ENCODE measurements at regions of chr6 and their contacts with region 1.

Region 1: DNA sequence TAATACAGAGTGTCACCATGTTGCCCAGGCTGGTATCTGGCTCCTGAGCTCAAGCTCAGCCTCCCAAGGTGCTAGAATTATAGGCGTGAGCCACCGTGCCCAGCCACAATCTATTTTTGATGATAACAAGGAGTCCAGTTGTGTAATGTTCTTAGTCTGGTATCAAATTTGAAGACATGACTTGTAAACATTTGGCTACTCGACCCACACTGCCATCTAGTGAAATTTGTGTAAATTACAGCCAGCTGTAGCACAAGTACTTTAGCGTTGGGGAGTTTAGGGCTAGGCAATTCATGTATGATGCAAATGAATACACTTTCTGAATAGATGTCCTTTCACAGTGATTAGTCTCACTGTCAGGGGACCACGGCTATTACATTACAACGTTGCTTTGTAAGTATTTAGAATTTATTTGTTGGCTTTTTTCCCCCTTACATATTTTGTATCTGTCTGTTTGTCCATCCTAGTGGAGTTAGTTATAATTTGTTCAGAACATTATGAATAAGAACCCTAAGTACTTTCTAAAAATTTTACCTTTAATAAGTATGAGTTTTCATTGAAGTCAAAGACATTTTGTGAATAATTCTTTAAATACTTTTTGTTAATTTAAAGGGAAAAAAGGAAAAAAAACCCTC is 139.7 kb downstream of the PRDM13 start:
- DNase-seq: peak; percentile 85
- H3K4me3 ChIP-seq: no peak overlapping the region
- H3K27ac ChIP-seq: no peak overlapping the region
- H3K4me1 ChIP-seq: no peaks in the 10 kb centered on the region
- H3K27me3 ChIP-seq: no peaks in the 10 kb centered on the region
- CTCF ChIP-seq: peak; percentile 85

Region 2: DNA sequence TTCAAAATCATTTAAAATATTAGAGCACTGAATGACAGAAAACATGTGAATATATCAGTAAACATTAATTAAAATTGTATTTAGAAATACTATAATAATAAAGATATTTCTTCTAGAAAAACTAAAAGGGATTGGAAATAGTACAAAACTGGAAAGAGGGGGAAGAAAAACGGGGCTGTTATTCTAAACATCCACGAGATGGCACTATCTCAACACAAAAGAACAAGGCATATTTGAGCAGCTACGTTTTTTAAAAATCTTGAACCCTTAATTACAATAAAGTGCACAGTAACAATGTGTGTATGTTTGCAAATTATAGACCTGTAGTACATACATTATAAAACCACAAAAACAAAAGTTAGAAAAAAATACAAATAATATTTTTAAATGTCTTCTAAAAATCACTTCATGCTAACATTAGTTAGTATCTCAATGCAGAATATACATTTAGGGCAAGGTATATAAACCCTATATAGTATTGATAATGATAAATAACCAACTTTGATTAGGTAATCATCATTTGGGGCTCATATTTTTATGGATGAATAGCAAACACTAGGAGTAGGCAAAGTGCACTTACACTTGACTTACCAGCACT is 278.8 kb before region 1 on chr6:
- CTCF ChIA-PET with region 1: interaction called, 4 read pairs
- POLR2A ChIA-PET with region 1: no interaction called
- intact Hi-C with region 1: loop called (anchors 2 kb)
- DNase-seq: peak; percentile 48
- H3K4me3 ChIP-seq: no peak overlapping the region
- H3K27ac ChIP-seq: no peak overlapping the region
- H3K4me1 ChIP-seq: no peaks in the 10 kb centered on the region
- H3K27me3 ChIP-seq: no peaks in the 10 kb centered on the region
- CTCF ChIP-seq: peak; percentile 75

Region 3: GRCh38 chr6:99588618-99589289 is 157.6 kb before region 1 on chr6:
- CTCF ChIA-PET with region 1: no interaction called
- POLR2A ChIA-PET with region 1: no interaction called
- intact Hi-C with region 1: loop called (anchors 2 kb)
- DNase-seq: peak; percentile 92
- H3K4me3 ChIP-seq: peak overlapping the region; percentile 52
- H3K27ac ChIP-seq: no peak overlapping the region
- H3K4me1 ChIP-seq: peaks cover 15% of the 10 kb centered on the region
- H3K27me3 ChIP-seq: no peaks in the 10 kb centered on the region
- CTCF ChIP-seq: peak; percentile 89

Region 4: DNA sequence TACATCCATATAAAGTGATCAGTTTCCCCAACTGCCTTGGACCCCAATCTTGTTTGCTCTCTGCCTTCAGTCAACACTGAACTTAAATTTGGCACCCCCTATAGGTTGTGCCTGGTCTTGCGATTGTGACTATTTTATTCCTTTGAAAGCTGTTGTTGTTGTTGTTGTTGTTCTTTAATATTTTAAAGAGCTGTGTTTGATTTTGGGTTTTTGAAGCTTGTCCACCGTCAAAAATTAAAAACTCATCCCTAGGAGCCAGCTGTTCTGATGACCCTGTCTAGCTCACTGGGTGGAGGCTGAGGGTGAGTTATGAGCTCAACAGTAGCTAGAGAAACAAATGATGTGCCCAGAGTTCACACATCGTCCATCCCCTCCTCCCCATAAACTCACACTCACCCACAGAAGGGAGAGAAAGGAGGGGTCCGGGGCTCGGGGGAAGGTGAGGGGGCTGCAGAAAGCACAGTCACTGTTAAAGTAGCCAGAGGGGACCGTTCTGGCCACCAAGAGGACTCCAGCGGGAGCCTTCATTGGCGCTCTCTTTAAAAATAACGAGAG is 714.3 kb after region 1 on chr6:
- CTCF ChIA-PET with region 1: no interaction called
- POLR2A ChIA-PET with region 1: no interaction called
- intact Hi-C with region 1: no loop called
- DNase-seq: peak; percentile 41
- H3K4me3 ChIP-seq: peak overlapping the region; percentile 49
- H3K27ac ChIP-seq: no peak overlapping the region
- H3K4me1 ChIP-seq: peaks cover 4% of the 10 kb centered on the region
- H3K27me3 ChIP-seq: peaks cover 24% of the 10 kb centered on the region
- CTCF ChIP-seq: peak; percentile 77

Region 5: GRCh38 chr6:101266063-101266462 is 1519.7 kb after region 1 on chr6:
- CTCF ChIA-PET with region 1: no interaction called
- POLR2A ChIA-PET with region 1: no interaction called
- intact Hi-C with region 1: no loop called
- DNase-seq: no peak
- H3K4me3 ChIP-seq: no peak overlapping the region
- H3K27ac ChIP-seq: no peak overlapping the region
- H3K4me1 ChIP-seq: no peaks in the 10 kb centered on the region
- H3K27me3 ChIP-seq: no peaks in the 10 kb centered on the region
- CTCF ChIP-seq: no peak